Activated naive CD8-positive, alpha-beta T cell treated with anti-CD3 and anti-CD28 coated beads, Interleukin-2, amount 10 ng/mL, durations not matched to agents 7 days and 5 days (primary cell): ENCODE measurements at regions of chr19 and their contacts with region 1.

Region 1: DNA sequence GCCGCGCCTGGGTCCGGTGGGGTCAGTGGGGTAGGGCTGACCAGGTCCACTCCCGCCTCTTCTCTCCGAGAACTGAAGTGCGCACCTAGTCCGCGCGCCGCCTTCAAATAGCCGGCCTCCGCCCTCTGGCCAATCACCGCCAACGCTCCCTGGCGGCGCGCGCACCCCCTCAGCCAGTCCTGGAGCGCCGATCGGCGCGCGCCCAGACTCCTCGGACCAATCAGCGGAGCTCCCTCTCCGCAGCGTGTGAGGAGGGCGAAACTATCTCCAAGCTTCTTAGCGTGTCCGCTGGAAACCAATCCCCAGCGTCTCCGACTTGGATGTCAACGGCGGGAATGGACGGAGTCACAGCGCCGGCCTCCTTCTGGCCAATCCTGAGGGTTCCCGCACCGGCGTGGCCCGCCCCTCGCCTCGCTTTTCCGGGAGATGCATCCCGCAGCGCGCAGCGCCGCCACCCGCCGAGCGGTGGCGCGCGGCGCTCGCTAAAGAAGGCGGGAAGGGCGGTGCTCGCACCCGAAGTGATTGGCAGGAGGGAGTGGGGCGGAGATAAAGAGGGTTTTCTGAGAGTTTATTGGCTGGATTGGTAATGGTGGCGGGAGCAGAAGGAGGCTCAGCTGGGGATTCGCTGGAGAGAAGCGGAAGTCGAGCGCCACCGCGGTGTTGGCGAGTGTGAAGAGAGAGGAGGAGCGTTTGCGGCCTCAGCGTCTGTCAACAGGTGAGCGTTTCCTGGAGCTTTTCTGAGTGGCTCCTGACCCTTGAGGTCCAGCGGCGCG is at the start of gene ASF1B:
- DNase-seq: peak; percentile 97
- ATAC-seq: peak; percentile 88
- H3K4me3 Mint-ChIP-seq: peak within 1 kb of the TSS; percentile 85
- H3K27ac Mint-ChIP-seq: peak within 1 kb of the TSS; percentile 91
- H3K4me1 Mint-ChIP-seq: peaks cover 25% of the 10 kb centered on the region
- H3K27me3 Mint-ChIP-seq: no peaks in the 10 kb centered on the region
- total RNA-seq, gene ASF1B: 75.3 to 82.4 TPM

Region 2: GRCh38 chr19:14081325-14082093 is 55.2 kb before region 1 on chr19:
- POLR2A ChIA-PET with region 1: interaction called, 11 read pairs
- DNase-seq: peak; percentile 99
- ATAC-seq: peak; percentile 92
- H3K4me3 Mint-ChIP-seq: peak overlapping the region; percentile 94
- H3K27ac Mint-ChIP-seq: peak overlapping the region; percentile 97
- H3K4me1 Mint-ChIP-seq: peaks cover 9% of the 10 kb centered on the region
- H3K27me3 Mint-ChIP-seq: no peaks in the 10 kb centered on the region

Region 3: GRCh38 chr19:14117668-14118164 is 19.0 kb before region 1 on chr19 and contains the start of gene PRKACA:
- POLR2A ChIA-PET with region 1: interaction called, 47 read pairs
- DNase-seq: peak; percentile 99
- ATAC-seq: peak; percentile 98
- H3K4me3 Mint-ChIP-seq: peak within 1 kb of the TSS; percentile 98
- H3K27ac Mint-ChIP-seq: peak within 1 kb of the TSS; percentile 88
- H3K4me1 Mint-ChIP-seq: peaks cover 40% of the 10 kb centered on the region
- H3K27me3 Mint-ChIP-seq: no peaks in the 10 kb centered on the region
- total RNA-seq, gene PRKACA: 64.1 to 66.9 TPM

Region 4: DNA sequence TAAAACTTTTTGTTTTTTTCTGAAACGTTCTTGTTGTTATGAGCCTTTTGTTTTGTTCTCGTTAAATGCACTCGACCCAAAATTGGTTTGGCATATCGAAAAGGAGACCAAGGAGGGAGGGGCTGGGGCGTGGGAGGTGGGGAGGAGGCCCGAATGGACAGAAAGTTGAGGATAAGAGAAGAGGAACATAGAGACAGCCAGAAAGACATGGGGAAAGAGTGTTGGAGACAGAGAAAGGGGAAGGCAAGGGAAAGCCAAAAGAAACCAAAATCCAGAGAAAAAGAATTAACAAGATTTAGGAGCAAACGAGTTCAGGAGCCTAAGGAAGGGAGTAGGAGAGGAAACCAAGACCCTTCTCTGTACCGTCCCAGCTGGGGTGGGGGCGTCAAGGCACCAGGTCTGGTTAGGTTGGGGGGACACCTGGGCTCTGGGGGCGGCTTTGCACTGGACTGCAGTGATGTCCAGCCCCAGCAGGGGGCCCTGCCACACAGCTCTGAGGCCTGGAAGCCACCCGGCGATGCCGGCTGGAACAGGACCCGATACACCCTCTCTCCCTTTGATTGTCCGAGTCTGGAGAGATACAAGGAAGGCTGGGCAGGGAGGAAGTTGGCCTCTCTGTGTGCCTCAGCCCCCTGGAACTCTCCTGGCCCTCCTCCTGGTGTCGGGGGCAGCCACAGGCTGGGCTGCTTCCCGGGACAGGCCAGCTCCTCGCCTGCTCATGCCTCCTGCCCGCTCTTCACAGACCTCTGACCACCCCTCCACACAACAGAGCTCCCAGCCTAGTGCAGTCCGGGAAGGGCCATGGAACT is 11.3 kb after region 1 on chr19:
- POLR2A ChIA-PET with region 1: interaction called, 47 read pairs
- DNase-seq: peak; percentile 75
- ATAC-seq: peak; percentile 46
- H3K4me3 Mint-ChIP-seq: peak overlapping the region; percentile 67
- H3K27ac Mint-ChIP-seq: peak overlapping the region; percentile 91
- H3K4me1 Mint-ChIP-seq: peaks cover 25% of the 10 kb centered on the region
- H3K27me3 Mint-ChIP-seq: no peaks in the 10 kb centered on the region